PC-3 (cell line): ENCODE measurements at regions of chr14 and their contacts with region 1.

Region 1: GRCh38 chr14:64758691-64759584 is 54.7 kb downstream of the PLEKHG3 start:
- DNase-seq: peak; percentile 82
- ATAC-seq: peak; percentile 47
- H3K4me3 ChIP-seq: no peak overlapping the region; the same call in 1 of the 2 replicates
- H3K27ac ChIP-seq: peak overlapping the region; percentile 87
- H3K4me1 ChIP-seq: peaks cover 78% of the 10 kb centered on the region
- H3K27me3 ChIP-seq: no peaks in the 10 kb centered on the region
- CTCF ChIP-seq: no peak

Region 2: DNA sequence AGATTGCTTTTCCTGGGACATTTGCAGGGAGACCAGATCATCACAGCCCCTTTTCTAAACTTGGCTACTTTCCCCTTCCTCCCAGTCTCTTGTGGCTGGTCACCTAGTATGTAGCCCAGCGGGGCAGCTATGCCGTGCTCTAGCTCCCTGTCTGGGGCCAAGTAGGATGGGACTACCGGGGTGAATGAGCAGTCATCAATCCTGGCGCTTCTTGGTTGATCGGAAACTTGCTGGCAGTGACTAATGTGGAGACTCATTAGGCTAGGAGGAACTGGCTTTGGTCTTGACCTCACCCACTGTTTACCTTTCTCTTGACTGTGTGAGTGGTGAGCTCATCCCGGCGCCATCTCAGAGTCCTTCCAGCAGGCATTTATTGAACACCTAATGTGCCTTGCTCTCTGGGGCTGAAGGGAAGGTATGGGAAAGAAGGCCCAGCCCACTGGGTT is 38.8 kb before region 1 on chr14:
- CTCF ChIA-PET with region 1: interaction called, 3 read pairs
- POLR2A ChIA-PET with region 1: no interaction called
- intact Hi-C with region 1: loop called (anchors 2 kb)
- DNase-seq: peak; percentile 98
- ATAC-seq: peak; percentile 94
- H3K4me3 ChIP-seq: peak overlapping the region; percentile 16; the same call in 1 of the 2 replicates
- H3K27ac ChIP-seq: peak overlapping the region; percentile 93
- H3K4me1 ChIP-seq: peaks cover 76% of the 10 kb centered on the region
- H3K27me3 ChIP-seq: no peaks in the 10 kb centered on the region
- CTCF ChIP-seq: no peak